AG04449 (cell line): ENCODE measurements at regions of chr11 and their contacts with region 1.

Region 1: GRCh38 chr11:125429166-125429707 is 66.8 kb downstream of the FEZ1 start:
- DNase-seq: no peak
- H3K4me3 ChIP-seq: no peak overlapping the region
- CTCF ChIP-seq: peak; percentile 85

Region 2: GRCh38 chr11:124961972-124962609 is 467.1 kb before region 1 on chr11:
- CTCF ChIA-PET with region 1: interaction called, 29 read pairs
- POLR2A ChIA-PET with region 1: no interaction called
- DNase-seq: peak; percentile 33
- H3K4me3 ChIP-seq: no peak overlapping the region
- CTCF ChIP-seq: peak; percentile 51

Region 3: GRCh38 chr11:124970925-124971324 is 458.3 kb before region 1 on chr11:
- CTCF ChIA-PET with region 1: interaction called, 18 read pairs
- POLR2A ChIA-PET with region 1: no interaction called
- DNase-seq: no peak
- H3K4me3 ChIP-seq: no peak overlapping the region
- CTCF ChIP-seq: no peak

Region 4: DNA sequence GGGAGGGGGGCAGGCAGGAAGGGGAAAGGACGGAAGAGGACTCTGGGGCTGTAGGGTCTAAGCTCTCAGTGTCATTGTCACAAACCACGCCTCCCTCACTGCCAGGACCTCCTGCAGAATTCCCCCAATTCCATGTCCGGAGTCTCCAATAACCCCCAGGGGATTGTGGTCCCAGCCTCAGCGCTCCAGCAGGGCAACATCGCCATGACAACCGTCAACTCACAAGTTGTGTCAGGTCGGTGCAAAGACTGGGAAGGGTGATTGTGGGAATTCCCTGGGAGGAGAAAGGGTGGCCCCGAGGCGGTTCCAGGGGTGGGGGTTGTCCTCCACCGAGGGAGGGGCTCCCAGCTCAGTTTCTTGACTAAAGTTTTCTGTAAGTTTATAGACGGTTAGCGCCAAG is 19.1 kb before region 1 on chr11:
- CTCF ChIA-PET with region 1: interaction called, 92 read pairs
- POLR2A ChIA-PET with region 1: no interaction called
- DNase-seq: no peak
- H3K4me3 ChIP-seq: no peak overlapping the region
- CTCF ChIP-seq: no peak

Region 5: DNA sequence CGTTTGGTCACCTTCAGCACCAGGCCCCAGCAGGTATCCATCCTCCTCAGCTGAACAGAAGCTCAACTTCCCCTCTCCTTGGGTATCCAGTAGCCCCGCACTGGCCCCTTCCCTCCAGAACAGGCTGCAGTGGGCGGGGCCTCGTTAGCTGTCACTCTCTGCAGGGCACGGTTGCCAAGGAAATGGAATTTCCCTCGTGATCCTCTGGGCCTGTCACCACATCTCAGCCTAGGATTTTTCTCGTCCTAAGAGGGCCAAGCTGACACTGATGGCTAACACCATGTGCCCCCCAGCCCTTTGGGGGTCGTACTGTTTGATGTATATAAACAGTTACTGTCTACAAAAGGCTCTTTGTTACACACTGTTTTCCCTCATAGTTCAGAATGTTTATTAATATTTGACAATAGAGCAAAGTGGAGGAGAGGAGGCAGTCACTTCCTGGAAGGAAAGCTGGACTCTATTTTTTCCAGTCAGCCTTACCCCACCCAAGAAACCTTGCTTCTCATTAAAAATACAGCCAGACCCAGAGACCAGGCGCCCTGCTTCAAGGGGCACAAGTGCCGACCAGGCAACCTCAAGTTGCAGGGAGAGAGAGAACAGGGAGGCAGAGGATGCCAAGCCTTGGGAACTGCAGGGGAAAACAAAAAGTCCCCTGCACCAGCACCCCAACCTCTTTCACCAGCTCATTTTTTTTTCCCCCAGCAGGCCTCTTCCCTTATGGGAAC is 22.3 kb after region 1 on chr11:
- CTCF ChIA-PET with region 1: interaction called, 46 read pairs
- POLR2A ChIA-PET with region 1: no interaction called
- DNase-seq: no peak
- H3K4me3 ChIP-seq: no peak overlapping the region
- CTCF ChIP-seq: no peak